Aorta (tissue), 5 donors: ENCODE measurements at regions of chr3 and their contacts with region 1.

Region 1: GRCh38 chr3:70064194-70064779 is 64.8 kb downstream of the SAMMSON start:
- DNase-seq: no peak
- ATAC-seq: no peak
- H3K4me3 ChIP-seq: no peak overlapping the region
- H3K27ac ChIP-seq: peak overlapping the region; percentile 22 to 44
- H3K4me1 ChIP-seq: peaks cover 7 to 8% of the 10 kb centered on the region in 2 donors
- H3K27me3 ChIP-seq: no peaks in the 10 kb centered on the region

Region 2: DNA sequence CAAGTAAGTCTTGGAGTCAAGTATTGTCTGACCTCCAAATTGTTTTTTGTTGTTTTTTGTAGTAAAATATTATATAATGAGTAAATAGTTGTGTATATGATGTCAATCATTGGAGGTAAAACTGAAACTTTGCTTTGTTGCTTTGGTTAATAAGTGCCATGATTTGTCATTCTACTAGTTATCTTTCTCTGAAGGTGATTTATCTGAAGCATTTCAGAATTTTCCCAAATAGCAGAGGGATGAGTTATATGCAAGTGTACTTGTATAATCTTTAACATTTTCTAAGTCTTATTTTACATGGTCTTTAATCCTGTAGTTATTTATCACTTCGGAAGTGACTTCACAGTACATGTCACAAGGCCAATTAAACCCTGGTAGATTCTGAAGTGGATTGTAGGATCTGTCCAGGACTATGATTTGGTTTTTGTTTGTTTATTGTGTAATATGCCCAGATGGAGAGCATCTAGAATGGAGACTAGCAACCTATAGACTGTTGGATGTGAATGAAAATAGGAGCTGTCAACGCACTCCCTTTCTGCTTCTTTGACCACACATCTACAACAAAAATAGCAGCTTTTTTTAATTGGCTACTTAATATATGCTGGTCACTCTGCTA is 157.8 kb before region 1 on chr3:
- intact Hi-C with region 1: no loop called
- DNase-seq: no peak
- ATAC-seq: no peak
- H3K4me3 ChIP-seq: no peak overlapping the region
- H3K27ac ChIP-seq: no peak overlapping the region
- H3K4me1 ChIP-seq: peaks cover 0 to 9% of the 10 kb centered on the region in 2 donors
- H3K27me3 ChIP-seq: no peaks in the 10 kb centered on the region

Region 3: GRCh38 chr3:69999191-70000027 is 64.9 kb before region 1 on chr3 and contains the start of gene SAMMSON:
- intact Hi-C with region 1: loop called in 1 of 2 experiments (anchors 10 kb)
- DNase-seq: peak; percentile 44 to 80
- ATAC-seq: peak; percentile 66
- H3K4me3 ChIP-seq: no peak within 1 kb of the TSS
- H3K27ac ChIP-seq: peak within 1 kb of the TSS; percentile 95 to 100
- H3K4me1 ChIP-seq: peaks cover 0 to 3% of the 10 kb centered on the region in 2 donors
- H3K27me3 ChIP-seq: no peaks in the 10 kb centered on the region
- total RNA-seq, gene SAMMSON: 14.7 to 25.6 TPM

Region 4: DNA sequence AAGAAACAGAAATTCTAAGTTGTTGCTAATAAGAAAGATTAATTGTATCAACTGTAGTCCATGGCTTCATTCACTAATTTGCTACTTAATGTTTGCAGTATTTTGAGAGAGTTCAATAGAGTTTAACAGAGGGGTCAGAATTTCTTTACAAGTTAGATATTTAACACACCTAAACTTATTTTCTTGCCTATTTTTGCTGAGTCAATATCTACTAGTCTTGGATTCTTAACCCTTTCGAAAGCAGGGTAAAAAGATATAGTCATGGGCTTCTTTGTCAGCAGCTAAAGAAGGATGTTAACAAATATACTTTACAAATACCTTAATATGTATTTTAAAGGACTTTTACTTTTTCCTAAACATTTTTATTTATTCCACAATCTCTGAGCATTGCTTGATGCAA is 92.5 kb after region 1 on chr3:
- intact Hi-C with region 1: no loop called
- DNase-seq: no peak
- ATAC-seq: no peak
- H3K4me3 ChIP-seq: no peak overlapping the region
- H3K27ac ChIP-seq: no peak overlapping the region
- H3K4me1 ChIP-seq: no peaks in the 10 kb centered on the region
- H3K27me3 ChIP-seq: no peaks in the 10 kb centered on the region